ENCODE measurements at regions of chr7 and their contacts with region 1.

Region 1: GRCh38 chr7:37201003-37201875 is 247.4 kb downstream of the ELMO1 start:
- DNase-seq: peak; percentile 62
- ATAC-seq: peak; percentile 56
- H3K4me3 Mint-ChIP-seq: no peak overlapping the region
- H3K27ac Mint-ChIP-seq: no peak overlapping the region
- H3K4me1 Mint-ChIP-seq: peaks cover 11% of the 10 kb centered on the region
- H3K27me3 Mint-ChIP-seq: no peaks in the 10 kb centered on the region

Region 2: GRCh38 chr7:36487756-36488336 is 713.4 kb before region 1 on chr7:
- CTCF ChIA-PET with region 1: interaction called, 32 read pairs
- DNase-seq: peak; percentile 57
- ATAC-seq: peak; percentile 70
- H3K4me3 Mint-ChIP-seq: no peak overlapping the region
- H3K27ac Mint-ChIP-seq: no peak overlapping the region
- H3K4me1 Mint-ChIP-seq: peaks cover 2% of the 10 kb centered on the region
- H3K27me3 Mint-ChIP-seq: peaks cover 3% of the 10 kb centered on the region

Region 3: DNA sequence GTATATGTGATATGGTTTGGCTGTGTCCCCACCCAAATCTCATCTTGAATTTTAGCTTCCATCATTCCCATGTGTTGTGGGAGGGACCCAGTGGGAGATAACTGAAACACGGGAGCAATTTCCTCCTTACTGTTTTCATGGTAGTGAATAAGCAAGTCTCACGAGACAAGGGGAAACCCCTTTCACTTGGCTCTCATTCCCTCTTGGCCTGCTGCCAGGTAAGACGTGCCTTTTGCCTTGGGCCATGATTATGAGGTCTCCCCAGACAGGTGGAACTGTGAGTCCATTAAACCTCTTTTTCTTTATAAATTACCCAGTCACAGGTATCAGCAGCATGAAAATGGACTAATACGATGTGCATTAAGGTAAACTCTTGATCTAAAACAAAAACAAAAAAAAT is 119.8 kb before region 1 on chr7:
- CTCF ChIA-PET with region 1: no interaction called
- DNase-seq: no peak
- ATAC-seq: no peak
- H3K4me3 Mint-ChIP-seq: no peak overlapping the region
- H3K27ac Mint-ChIP-seq: peak overlapping the region; percentile 10
- H3K4me1 Mint-ChIP-seq: peaks cover 12% of the 10 kb centered on the region
- H3K27me3 Mint-ChIP-seq: no peaks in the 10 kb centered on the region